ENCODE measurements at regions of chr6 and their contacts with region 1.

Region 1: DNA sequence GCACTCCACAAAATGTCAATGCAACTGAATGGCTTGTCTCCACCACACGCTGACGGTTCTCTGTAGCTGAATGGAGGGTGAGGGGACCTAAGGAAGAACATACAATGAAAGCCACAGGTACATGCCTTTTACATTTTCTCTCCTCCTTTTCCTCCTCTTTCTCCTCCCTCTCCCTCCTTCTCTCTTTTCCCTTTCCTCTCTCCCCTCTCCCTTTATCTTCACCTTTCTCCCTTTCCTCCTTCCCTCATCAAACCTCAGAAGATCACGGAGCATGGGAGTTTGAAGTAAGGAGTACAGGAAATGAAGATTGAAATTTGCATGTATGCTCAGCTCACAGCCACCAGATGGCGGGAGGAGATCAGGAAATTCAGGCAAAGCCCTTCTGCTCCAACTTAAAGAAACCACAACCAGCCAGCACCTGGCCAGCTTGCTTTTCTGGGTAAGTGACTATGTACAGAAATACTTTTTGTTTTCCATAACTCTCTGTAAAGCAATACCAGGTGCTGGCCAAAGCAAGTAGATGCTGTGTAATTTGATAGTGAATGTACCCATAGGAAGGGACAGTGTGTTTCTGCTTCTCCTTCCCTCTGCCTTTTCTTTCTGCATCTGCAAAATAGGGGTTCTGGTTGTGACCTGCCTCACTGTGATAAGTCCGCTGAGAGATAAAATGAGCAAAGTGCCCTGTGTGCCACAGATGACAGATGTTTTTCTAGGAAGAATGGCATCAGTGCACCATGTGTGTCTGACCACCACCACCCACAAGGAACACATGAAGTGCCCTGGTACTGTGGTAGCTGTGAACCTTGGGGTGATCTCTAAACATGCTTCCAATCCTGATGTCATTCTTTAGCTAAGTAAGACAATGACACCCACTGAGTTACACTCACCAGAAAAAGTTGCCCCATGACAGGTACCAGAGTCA is 18.6 kb upstream of the FOXO3 start:
- DNase-seq: peak; percentile 69 to 78
- H3K4me3 ChIP-seq: no peak overlapping the region
- H3K27ac ChIP-seq: no peak overlapping the region
- H3K4me1 ChIP-seq: no peaks in the 10 kb centered on the region
- H3K27me3 ChIP-seq: no peaks in the 10 kb centered on the region
- CTCF ChIP-seq: peak; percentile 53 to 96 (median 84)
- POLR2A ChIP-seq: no peak

Region 2: GRCh38 chr6:108423982-108424705 is 118.0 kb before region 1 on chr6:
- intact Hi-C with region 1: no loop called
- DNase-seq: no peak
- H3K4me3 ChIP-seq: no peak overlapping the region
- H3K27ac ChIP-seq: no peak overlapping the region
- H3K4me1 ChIP-seq: no peaks in the 10 kb centered on the region
- H3K27me3 ChIP-seq: no peaks in the 10 kb centered on the region
- CTCF ChIP-seq: no peak
- POLR2A ChIP-seq: no peak

Region 3: GRCh38 chr6:108782179-108783041 is 240.3 kb after region 1 on chr6:
- intact Hi-C with region 1: loop called (anchors 5 kb)
- DNase-seq: peak; percentile 82 to 88
- H3K4me3 ChIP-seq: peak overlapping the region; percentile 19 to 57 (median 30)
- H3K27ac ChIP-seq: peak overlapping the region in 1 of 3 donors; percentile 49
- H3K4me1 ChIP-seq: peaks cover 0 to 5% of the 10 kb centered on the region in 2 donors
- H3K27me3 ChIP-seq: no peaks in the 10 kb centered on the region
- CTCF ChIP-seq: peak; percentile 49 to 83 (median 72)
- POLR2A ChIP-seq: no peak

Region 4: DNA sequence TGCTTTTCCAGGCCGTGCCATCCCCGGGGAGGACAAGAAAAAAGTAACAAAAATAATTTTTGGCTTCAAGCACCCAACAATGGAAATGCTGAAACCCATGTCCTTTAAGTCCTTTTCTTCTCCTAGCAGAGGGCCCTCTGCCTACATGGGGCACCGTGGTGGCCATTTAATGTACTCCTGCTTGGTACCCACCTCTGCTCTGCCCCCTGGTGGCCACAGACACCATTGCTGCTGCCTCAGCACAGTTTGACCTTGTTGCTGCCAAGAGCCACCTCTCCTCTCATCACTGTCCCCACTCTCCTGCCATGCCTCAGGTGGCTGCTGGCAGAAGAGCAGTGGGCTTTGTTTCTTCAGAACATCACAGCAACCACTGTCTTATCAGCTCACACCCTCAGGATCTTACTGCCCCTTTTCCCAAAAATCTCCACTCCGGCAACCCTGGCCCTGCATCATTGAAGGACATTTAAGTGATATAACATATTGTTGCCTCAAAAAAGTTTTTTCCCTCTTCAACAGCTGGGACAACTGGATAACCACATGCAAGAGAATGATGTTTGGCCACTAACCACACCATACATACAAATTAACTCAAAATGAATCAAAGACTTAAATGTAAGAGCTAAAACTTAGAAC is 293.2 kb after region 1 on chr6:
- intact Hi-C with region 1: loop called (anchors 5 kb)
- DNase-seq: peak; percentile 88 to 89
- H3K4me3 ChIP-seq: no peak overlapping the region
- H3K27ac ChIP-seq: no peak overlapping the region
- H3K4me1 ChIP-seq: peaks cover 5 to 14% of the 10 kb centered on the region in 2 donors
- H3K27me3 ChIP-seq: no peaks in the 10 kb centered on the region
- CTCF ChIP-seq: peak; percentile 77 to 97 (median 93)
- POLR2A ChIP-seq: no peak

Region 5: DNA sequence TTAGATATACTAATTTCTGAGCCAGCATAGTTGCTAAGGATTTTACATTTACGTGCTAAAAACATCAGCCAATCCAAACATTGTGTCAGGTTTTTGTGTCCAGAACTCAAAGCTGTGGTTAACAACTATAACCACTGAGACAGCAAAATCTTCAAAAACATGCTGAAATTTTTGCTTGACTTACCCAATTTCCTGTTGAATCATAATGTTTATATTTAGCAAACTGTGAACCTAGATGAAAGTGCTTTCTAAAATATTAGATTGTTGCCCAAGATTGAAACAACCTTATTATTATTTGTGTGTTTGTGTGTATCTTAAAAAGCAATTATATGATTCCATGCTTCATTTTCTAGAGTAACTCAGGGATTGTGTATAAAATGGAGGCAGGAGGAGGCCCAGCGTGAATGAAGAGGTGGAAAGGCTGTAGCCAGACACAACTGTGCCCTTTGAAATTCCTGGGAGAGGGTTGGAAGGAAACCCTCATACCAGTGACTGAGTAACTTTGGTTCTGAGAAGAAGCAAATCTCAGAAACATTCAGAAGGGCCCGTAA is 354.1 kb after region 1 on chr6:
- intact Hi-C with region 1: loop called (anchors 2 kb)
- DNase-seq: no peak
- H3K4me3 ChIP-seq: no peak overlapping the region
- H3K27ac ChIP-seq: peak overlapping the region in 2 of 3 donors; percentile 38 to 66
- H3K4me1 ChIP-seq: peaks cover 0 to 4% of the 10 kb centered on the region in 2 donors
- H3K27me3 ChIP-seq: no peaks in the 10 kb centered on the region
- CTCF ChIP-seq: no peak
- POLR2A ChIP-seq: no peak

Region 6: DNA sequence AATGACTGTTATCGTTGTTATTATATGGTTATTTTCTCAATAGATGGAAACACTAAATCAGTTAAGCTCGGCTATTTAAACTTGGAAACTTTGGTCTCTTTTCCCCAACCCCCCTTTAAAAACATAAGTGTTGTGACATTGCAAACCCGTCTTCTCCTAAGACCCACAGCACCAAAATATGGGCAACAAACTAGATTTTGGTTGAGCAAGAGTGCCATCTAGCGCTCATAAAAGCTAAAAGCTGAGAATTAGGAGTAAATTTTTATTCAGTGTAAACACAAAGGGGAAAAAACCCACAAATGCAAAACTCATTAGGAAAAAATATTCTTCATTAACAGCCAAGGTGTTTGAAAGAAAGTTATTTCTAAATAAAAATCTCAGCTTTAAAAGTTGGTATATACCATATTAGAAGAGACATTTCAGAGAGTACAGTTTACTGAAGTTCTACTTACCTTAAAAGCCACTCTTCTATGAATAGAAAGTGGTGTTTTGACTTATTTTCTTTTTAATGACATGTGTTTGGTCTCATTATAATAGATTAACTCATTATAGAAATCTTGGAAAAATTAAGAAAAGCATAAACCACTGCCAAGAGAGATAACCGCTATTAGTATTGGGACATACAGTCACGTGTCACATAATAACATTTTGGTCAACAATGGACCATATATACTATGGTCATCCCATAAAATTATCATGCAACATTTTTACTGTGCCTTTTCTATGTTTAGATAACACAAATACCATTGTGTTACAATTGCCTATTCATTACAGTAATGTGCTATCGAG is 531.4 kb after region 1 on chr6:
- intact Hi-C with region 1: loop called (anchors 5 kb)
- DNase-seq: peak; percentile 14 to 17
- H3K4me3 ChIP-seq: no peak overlapping the region
- H3K27ac ChIP-seq: no peak overlapping the region
- H3K4me1 ChIP-seq: peaks cover 9 to 20% of the 10 kb centered on the region in 2 donors
- H3K27me3 ChIP-seq: no peaks in the 10 kb centered on the region
- CTCF ChIP-seq: peak in 5 of 6 experiments; percentile 60 to 80 (median 71)
- POLR2A ChIP-seq: no peak